CD4-positive, alpha-beta memory T cell (primary cell): ENCODE measurements at regions of chr9 and their contacts with region 1.

Region 1: GRCh38 chr9:20941174-20941690 is 90.2 kb downstream of the HACD4 start:
- DNase-seq: peak; percentile 56 to 67 (median 61)
- H3K4me3 ChIP-seq: no peak overlapping the region
- H3K4me3 Mint-ChIP-seq: no peak overlapping the region
- H3K27ac ChIP-seq: no peak overlapping the region
- H3K27ac Mint-ChIP-seq: peak overlapping the region in 1 of 7 donors; percentile 77
- H3K4me1 ChIP-seq: no peaks in the 10 kb centered on the region
- H3K4me1 Mint-ChIP-seq: peaks cover 0 to 5% (median 3%) of the 10 kb centered on the region in 4 donors
- H3K27me3 ChIP-seq: no peaks in the 10 kb centered on the region
- H3K27me3 Mint-ChIP-seq: no peaks in the 10 kb centered on the region

Region 2: GRCh38 chr9:19471737-19472648 is 1469.2 kb before region 1 on chr9:
- CTCF ChIA-PET with region 1: interaction called, 7 read pairs
- POLR2A ChIA-PET with region 1: no interaction called
- intact Hi-C with region 1: loop called (anchors 1 kb)
- DNase-seq: peak; percentile 12 to 65 (median 26)
- H3K4me3 ChIP-seq: peak overlapping the region; percentile 3 to 44
- H3K4me3 Mint-ChIP-seq: peak overlapping the region; percentile 60 to 83 (median 80)
- H3K27ac ChIP-seq: no peak overlapping the region
- H3K27ac Mint-ChIP-seq: peak overlapping the region in 6 of 7 donors; percentile 18 to 77 (median 50)
- H3K4me1 ChIP-seq: peaks cover 11% of the 10 kb centered on the region
- H3K4me1 Mint-ChIP-seq: peaks cover 3 to 14% (median 10%) of the 10 kb centered on the region in 4 donors
- H3K27me3 ChIP-seq: no peaks in the 10 kb centered on the region
- H3K27me3 Mint-ChIP-seq: no peaks in the 10 kb centered on the region

Region 3: GRCh38 chr9:20043035-20043434 is 898.2 kb before region 1 on chr9:
- CTCF ChIA-PET with region 1: interaction called, 3 read pairs
- POLR2A ChIA-PET with region 1: no interaction called
- intact Hi-C with region 1: loop called (anchors 10 kb)
- DNase-seq: peak in 4 of 5 donors; percentile 18 to 38 (median 24)
- H3K4me3 ChIP-seq: peak overlapping the region; percentile 43 to 64
- H3K4me3 Mint-ChIP-seq: peak overlapping the region; percentile 68 to 90 (median 82)
- H3K27ac ChIP-seq: peak overlapping the region; percentile 37
- H3K27ac Mint-ChIP-seq: peak overlapping the region; percentile 78 to 95 (median 87)
- H3K4me1 ChIP-seq: peaks cover 24% of the 10 kb centered on the region
- H3K4me1 Mint-ChIP-seq: peaks cover 17 to 44% (median 24%) of the 10 kb centered on the region in 4 donors
- H3K27me3 ChIP-seq: no peaks in the 10 kb centered on the region
- H3K27me3 Mint-ChIP-seq: no peaks in the 10 kb centered on the region

Region 4: GRCh38 chr9:20356403-20357035 is 584.7 kb before region 1 on chr9:
- CTCF ChIA-PET with region 1: interaction called, 15 read pairs
- POLR2A ChIA-PET with region 1: no interaction called
- intact Hi-C with region 1: loop called (anchors 1 kb)
- DNase-seq: peak; percentile 34 to 51 (median 42)
- H3K4me3 ChIP-seq: no peak overlapping the region
- H3K4me3 Mint-ChIP-seq: no peak overlapping the region
- H3K27ac ChIP-seq: no peak overlapping the region
- H3K27ac Mint-ChIP-seq: peak overlapping the region in 5 of 7 donors; percentile 5 to 82 (median 68)
- H3K4me1 ChIP-seq: peaks cover 9% of the 10 kb centered on the region
- H3K4me1 Mint-ChIP-seq: peaks cover 13 to 55% (median 24%) of the 10 kb centered on the region in 4 donors
- H3K27me3 ChIP-seq: no peaks in the 10 kb centered on the region
- H3K27me3 Mint-ChIP-seq: no peaks in the 10 kb centered on the region

Region 5: GRCh38 chr9:20929276-20929675 is 12.0 kb before region 1 on chr9:
- CTCF ChIA-PET with region 1: interaction called, 18 read pairs
- POLR2A ChIA-PET with region 1: no interaction called
- intact Hi-C with region 1: no loop called
- DNase-seq: no peak
- H3K4me3 ChIP-seq: no peak overlapping the region
- H3K4me3 Mint-ChIP-seq: no peak overlapping the region
- H3K27ac ChIP-seq: no peak overlapping the region
- H3K27ac Mint-ChIP-seq: no peak overlapping the region
- H3K4me1 ChIP-seq: peaks cover 9% of the 10 kb centered on the region
- H3K4me1 Mint-ChIP-seq: peaks cover 2 to 13% (median 8%) of the 10 kb centered on the region in 4 donors
- H3K27me3 ChIP-seq: no peaks in the 10 kb centered on the region
- H3K27me3 Mint-ChIP-seq: no peaks in the 10 kb centered on the region